ENCODE measurements at regions of chr3 and their contacts with region 1.

Region 1: DNA sequence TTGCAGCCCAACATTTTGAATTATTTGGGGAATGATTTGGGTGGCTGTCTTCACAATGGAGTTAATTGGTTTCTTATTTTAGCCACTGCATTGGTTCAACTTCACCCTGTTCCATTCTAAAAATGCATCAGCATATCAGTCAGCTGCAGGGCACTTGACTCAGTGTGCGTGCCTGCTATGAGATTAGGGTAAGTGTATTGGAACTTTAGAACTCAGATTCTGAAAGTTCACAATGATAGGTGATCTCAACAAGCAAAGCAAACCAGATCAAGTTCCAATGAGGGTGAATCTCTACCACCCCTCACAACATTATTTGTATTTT is 265.0 kb downstream of the ZPLD1 start:
- DNase-seq: peak in 1 of 2 donors; percentile 26
- ATAC-seq: peak in 6 of 8 donors; percentile 77 to 96 (median 94)
- H3K4me3 ChIP-seq: no peak overlapping the region
- H3K27ac ChIP-seq: peak overlapping the region in 8 of 10 donors; percentile 44 to 80 (median 69)
- H3K4me1 ChIP-seq: peaks cover 0 to 12% (median 0%) of the 10 kb centered on the region in 9 donors
- H3K27me3 ChIP-seq: no peaks in the 10 kb centered on the region
- CTCF ChIP-seq: no peak

Region 2: GRCh38 chr3:102444101-102444500 is 255.7 kb before region 1 on chr3:
- intact Hi-C with region 1: no loop called
- DNase-seq: no peak
- ATAC-seq: no peak
- H3K4me3 ChIP-seq: no peak overlapping the region
- H3K27ac ChIP-seq: no peak overlapping the region
- H3K4me1 ChIP-seq: no peaks in the 10 kb centered on the region
- H3K27me3 ChIP-seq: no peaks in the 10 kb centered on the region
- CTCF ChIP-seq: no peak

Region 3: GRCh38 chr3:102733791-102734574 is 34.2 kb after region 1 on chr3:
- intact Hi-C with region 1: loop called in 1 of 10 experiments (anchors 2 kb)
- DNase-seq: no peak
- ATAC-seq: no peak
- H3K4me3 ChIP-seq: no peak overlapping the region
- H3K27ac ChIP-seq: no peak overlapping the region
- H3K4me1 ChIP-seq: peaks cover 0 to 18% (median 3%) of the 10 kb centered on the region in 9 donors
- H3K27me3 ChIP-seq: no peaks in the 10 kb centered on the region
- CTCF ChIP-seq: no peak

Measured in heart right ventricle (tissue), 16 donors.